ENCODE measurements at regions of chr9 and their contacts with region 1.

Region 1: DNA sequence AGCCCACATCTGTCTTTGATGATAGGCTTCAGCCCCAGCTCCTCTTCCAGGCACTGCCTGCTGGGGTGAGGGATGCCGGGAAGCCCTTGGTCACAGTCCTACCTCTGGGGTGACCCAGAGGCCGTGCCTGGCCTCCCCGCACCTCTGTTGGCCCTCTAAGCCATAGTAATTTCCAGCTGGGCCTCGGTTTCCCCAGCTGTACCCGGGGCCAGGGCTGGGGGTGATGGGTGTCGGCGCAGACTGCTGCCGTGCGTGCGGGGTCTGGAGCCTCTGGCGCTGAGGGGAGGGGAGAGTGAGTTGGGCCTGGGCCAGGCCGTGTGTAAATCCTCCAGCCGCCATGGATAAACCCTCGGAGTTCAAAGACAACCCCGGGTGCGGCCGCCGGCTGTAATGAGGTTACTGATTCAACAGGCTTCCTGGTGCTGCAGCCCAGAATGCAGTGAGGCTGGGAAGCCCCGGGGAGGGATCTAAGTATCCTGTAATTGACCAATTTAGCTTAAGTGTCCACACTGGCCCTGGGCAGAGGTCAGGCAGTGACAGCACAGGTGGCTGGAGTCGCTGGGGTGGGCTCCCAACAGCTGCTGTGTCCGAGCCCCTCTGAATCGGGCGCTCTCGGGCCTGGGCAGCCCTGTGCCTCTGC is 7.1 kb downstream of the RXRA start:
- DNase-seq: no peak
- ATAC-seq: peak; percentile 22; the same call in 1 of the 2 replicates
- H3K4me3 ChIP-seq: no peak overlapping the region
- H3K27ac ChIP-seq: no peak overlapping the region
- H3K4me1 ChIP-seq: peaks cover 49% of the 10 kb centered on the region
- H3K27me3 ChIP-seq: no peaks in the 10 kb centered on the region
- CTCF ChIP-seq: no peak
- POLR2A ChIP-seq: no peak
- RAD21 ChIP-seq: no peak

Region 2: GRCh38 chr9:134424818-134425217 is 91.5 kb after region 1 on chr9:
- CTCF ChIA-PET with region 1: no interaction called
- POLR2A ChIA-PET with region 1: no interaction called
- dilution Hi-C with region 1: no loop called
- in situ Hi-C with region 1: loop called (anchors 5 kb)
- intact Hi-C with region 1: no loop called
- DNase-seq: no peak
- ATAC-seq: no peak
- H3K4me3 ChIP-seq: no peak overlapping the region
- H3K27ac ChIP-seq: no peak overlapping the region
- H3K4me1 ChIP-seq: no peaks in the 10 kb centered on the region
- H3K27me3 ChIP-seq: no peaks in the 10 kb centered on the region
- CTCF ChIP-seq: no peak
- POLR2A ChIP-seq: no peak
- RAD21 ChIP-seq: no peak

Measured in IMR-90 (cell line).